Colonic mucosa (tissue), 4 donors: ENCODE measurements at regions of chr3 and their contacts with region 1.

Region 1: DNA sequence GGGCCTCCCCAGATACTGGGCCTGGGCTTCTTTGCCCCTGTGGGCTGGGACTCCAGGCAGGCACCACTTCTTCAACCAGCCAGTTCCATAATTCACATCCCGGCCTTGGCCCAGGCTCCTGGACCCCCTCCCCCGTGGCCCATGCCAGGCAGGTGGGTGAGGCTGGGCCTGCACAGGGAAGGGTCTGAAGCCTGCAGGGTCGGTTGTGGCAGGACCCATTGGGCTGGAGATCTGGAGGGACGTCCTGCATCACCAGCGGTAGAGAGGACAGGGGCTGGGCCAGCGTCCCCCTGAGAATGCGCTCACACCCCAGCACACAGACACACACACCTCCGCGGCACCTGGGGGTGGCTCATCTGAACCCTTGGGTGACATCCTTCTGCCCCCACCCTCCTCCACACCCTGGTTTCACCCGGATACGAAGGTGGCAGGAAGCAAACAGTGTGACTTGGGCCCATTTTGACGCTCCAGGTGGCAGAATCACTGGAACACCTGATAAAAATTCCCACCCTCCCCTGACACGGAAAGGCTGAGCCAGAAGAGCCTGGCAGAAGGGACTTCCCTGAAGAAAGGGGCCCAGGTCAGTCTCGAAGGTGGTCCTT is 15.4 kb downstream of the ZDHHC19 start:
- DNase-seq: no peak
- H3K4me3 ChIP-seq: no peak overlapping the region
- H3K27ac ChIP-seq: no peak overlapping the region
- H3K4me1 ChIP-seq: peaks cover 13% of the 10 kb centered on the region
- H3K27me3 ChIP-seq: no peaks in the 10 kb centered on the region
- CTCF ChIP-seq: no peak

Region 2: DNA sequence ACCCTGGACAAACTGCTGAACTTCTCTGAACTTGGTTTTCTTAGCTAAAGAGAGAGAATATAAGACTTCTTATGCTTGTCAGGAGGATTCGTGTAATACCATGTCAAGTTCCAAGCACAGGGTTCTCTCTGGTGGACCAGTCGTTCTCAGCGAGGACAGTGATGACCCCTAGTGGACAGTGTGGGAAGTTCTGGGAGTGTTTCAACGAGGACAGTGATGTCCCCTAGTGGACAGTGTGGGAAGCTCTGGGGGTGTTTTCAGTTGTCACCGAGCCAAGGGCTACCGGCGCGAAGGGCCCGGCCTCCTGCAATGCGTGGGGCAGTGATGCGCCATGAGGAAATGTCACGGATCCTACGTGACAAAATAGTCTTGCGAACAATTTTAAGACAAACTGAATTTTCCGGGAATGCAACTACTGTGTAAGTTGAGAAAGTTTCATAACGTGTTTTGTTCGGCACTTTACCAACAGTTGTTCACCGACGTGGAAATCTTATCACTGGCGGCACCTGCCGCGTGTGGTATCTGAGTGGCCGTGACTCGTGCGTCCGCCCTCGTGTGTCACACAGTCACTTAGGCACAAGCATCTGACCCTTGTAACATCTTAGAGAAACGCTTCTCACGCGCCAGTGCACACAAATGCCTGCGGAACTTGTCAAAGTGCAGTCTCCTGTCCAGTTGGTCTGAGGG is 344.8 kb before region 1 on chr3:
- intact Hi-C with region 1: no loop called
- DNase-seq: peak; percentile 96
- H3K4me3 ChIP-seq: no peak overlapping the region
- H3K27ac ChIP-seq: no peak overlapping the region
- H3K4me1 ChIP-seq: no peaks in the 10 kb centered on the region
- H3K27me3 ChIP-seq: no peaks in the 10 kb centered on the region
- CTCF ChIP-seq: peak; percentile 100

Region 3: GRCh38 chr3:196023947-196024346 is 171.8 kb before region 1 on chr3:
- intact Hi-C with region 1: loop called (anchors 2 kb)
- DNase-seq: no peak
- H3K4me3 ChIP-seq: no peak overlapping the region
- H3K27ac ChIP-seq: no peak overlapping the region
- H3K4me1 ChIP-seq: no peaks in the 10 kb centered on the region
- H3K27me3 ChIP-seq: no peaks in the 10 kb centered on the region
- CTCF ChIP-seq: no peak

Region 4: DNA sequence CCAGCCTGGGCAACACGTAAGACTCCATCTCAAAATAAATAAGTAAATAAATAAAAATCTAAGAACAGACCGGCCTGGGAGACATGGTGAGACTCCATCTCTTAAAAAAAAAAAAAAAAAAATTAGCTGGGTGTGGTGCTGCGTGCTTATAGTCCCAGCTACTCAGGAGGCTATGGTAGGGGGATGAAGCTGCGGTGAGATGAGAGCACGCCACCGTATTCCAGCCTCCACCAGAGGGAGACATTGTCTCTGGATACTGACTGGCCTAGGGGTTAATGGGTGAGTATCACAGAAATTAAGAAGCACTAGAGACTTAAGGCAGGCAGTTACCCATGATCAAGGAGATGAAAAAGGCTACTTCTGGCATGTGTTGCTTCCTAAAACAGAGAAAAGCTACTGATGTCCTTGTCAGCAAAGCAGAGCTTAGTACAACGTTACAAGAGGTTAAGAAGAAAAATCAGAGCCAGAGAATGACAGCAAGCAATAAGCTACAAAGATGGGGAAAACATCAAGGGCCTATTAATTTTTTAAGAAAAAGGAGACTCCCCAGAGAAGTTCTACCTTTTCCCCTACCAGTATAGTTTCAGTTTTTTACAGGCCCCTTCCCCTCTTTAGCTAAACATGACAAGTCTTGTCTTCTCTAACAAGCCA is 122.5 kb before region 1 on chr3:
- intact Hi-C with region 1: loop called (anchors 2 kb)
- DNase-seq: peak; percentile 70
- H3K4me3 ChIP-seq: no peak overlapping the region
- H3K27ac ChIP-seq: no peak overlapping the region
- H3K4me1 ChIP-seq: no peaks in the 10 kb centered on the region
- H3K27me3 ChIP-seq: no peaks in the 10 kb centered on the region
- CTCF ChIP-seq: peak; percentile 65